A549 (cell line): ENCODE measurements at regions of chr15 and their contacts with region 1.

Region 1: GRCh38 chr15:69540622-69541021 is 88.0 kb downstream of the RPLP1 start:
- DNase-seq: no peak
- ATAC-seq: no peak
- H3K4me3 ChIP-seq: no peak overlapping the region
- H3K27ac ChIP-seq: no peak overlapping the region
- H3K4me1 ChIP-seq: no peaks in the 10 kb centered on the region
- CTCF ChIP-seq: no peak
- EP300 ChIP-seq: no peak
- POLR2A ChIP-seq: no peak
- RAD21 ChIP-seq: no peak

Region 2: DNA sequence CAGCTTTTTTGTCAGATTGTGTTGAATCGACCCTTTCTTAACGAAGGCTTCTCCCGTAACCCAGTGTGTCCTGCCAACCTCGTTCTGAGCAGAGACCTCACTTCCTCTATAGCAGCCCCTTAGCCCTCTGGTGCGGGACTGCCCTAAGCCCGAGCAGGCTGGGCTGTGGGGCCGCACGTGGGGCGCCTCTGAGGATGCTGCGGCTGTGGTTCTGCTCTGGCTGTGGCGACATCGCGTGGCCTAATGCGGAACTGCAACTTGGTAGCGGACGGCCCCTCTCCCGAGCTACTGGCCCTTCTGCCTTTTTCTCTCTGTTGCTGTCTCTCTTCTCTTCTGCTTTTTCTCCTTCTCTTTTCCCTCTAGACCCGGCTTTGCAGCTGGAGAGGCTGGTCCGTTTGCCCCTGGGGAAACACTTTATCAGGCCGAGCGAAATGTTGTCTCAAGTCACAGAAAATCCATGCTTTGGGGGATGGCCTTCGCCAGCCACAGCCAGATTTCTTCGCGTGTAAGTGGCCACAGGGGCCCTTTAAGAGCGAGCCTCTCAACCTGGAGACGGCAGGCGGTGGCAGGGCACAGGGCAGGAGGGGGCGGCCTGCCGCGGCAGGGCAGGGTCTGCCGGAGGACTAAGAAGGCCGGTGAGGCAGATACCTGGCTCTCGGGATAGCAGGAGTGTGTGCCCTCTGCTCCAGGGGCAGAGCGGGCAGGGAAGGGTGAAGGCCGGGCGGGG is 145.9 kb before region 1 on chr15:
- CTCF ChIA-PET with region 1: no interaction called
- POLR2A ChIA-PET with region 1: no interaction called
- DNase-seq: peak; percentile 74 to 93
- ATAC-seq: peak; percentile 81 to 93
- H3K4me3 ChIP-seq: no peak overlapping the region
- H3K27ac ChIP-seq: peak overlapping the region; percentile 24 to 66; a peak in 5 of 6 replicates
- H3K4me1 ChIP-seq: peaks cover 26% of the 10 kb centered on the region
- CTCF ChIP-seq: peak; percentile 90
- EP300 ChIP-seq: no peak
- POLR2A ChIP-seq: no peak
- RAD21 ChIP-seq: peak; percentile 92 to 94

Region 3: GRCh38 chr15:69452692-69453521 is 87.7 kb before region 1 on chr15 and contains the start of gene RPLP1:
- CTCF ChIA-PET with region 1: no interaction called
- POLR2A ChIA-PET with region 1: no interaction called
- DNase-seq: peak; percentile 94 to 97
- ATAC-seq: peak; percentile 80 to 88
- H3K4me3 ChIP-seq: peak within 1 kb of the TSS; percentile 94
- H3K27ac ChIP-seq: peak within 1 kb of the TSS; percentile 90 to 93
- H3K4me1 ChIP-seq: peaks cover 36% of the 10 kb centered on the region
- CTCF ChIP-seq: no peak
- EP300 ChIP-seq: no peak
- POLR2A ChIP-seq: peak; percentile 100
- RAD21 ChIP-seq: no peak
- polyA plus RNA-seq, gene RPLP1: 1,245 and 1,557 TPM in 2 replicates

Region 4: DNA sequence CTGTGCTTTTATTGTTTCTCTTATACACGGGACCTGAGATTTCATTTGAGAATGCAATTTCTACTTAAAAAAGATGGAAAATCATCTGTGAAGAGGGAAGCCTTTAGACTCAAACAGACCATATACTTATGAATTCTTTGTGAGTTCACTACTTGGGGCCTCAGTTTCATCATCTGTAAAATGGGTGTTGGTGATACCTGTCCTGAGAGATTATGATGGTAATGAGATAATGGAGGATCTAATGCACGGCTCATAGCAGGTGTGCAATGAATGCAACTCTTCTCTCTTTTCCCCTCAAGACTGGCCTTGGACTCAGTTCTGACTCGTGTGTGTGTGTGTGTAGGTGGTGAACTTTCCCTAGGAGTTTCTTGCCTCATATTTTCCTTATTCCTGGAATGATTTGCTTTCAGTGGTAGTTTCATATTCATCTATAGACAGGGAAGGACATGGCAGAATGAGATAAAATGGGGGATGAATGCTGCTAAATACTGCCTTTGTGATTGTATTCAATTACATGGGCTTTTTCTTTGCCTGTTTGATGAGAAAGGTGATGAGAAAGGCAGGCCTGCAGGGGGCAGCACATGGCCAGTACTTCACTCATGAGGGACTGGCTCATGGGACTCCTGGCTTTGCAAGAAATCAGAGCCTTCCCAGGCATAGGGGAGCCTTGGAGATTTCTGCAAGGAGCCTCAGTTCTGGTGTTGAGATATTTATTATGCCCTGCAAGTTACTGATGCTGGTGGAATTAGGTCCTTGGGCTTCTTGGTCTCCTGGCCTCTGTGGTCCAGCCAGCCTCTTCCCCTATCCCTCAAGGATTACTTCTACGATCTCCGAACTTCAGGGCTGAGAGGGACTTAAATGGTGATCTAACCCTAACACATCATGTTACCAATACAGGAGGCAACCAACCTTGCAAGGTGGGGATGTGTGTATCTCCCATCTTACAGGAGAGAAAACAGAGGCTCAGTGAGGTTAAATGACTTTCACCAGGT is 17.3 kb before region 1 on chr15:
- CTCF ChIA-PET with region 1: interaction called, 11 read pairs
- POLR2A ChIA-PET with region 1: no interaction called
- DNase-seq: peak; percentile 82
- ATAC-seq: peak; percentile 86 to 95
- H3K4me3 ChIP-seq: no peak overlapping the region
- H3K27ac ChIP-seq: peak overlapping the region in 1 of 2 experiments; percentile 42; a peak in 3 of 6 replicates
- H3K4me1 ChIP-seq: peaks cover 11% of the 10 kb centered on the region; the same call in 2 of the 3 replicates
- CTCF ChIP-seq: peak; percentile 91
- EP300 ChIP-seq: no peak
- POLR2A ChIP-seq: no peak
- RAD21 ChIP-seq: peak; percentile 94 to 96

Region 5: GRCh38 chr15:69604072-69604411 is 63.4 kb after region 1 on chr15:
- CTCF ChIA-PET with region 1: no interaction called
- POLR2A ChIA-PET with region 1: no interaction called
- DNase-seq: peak in 1 of 2 experiments; percentile 85
- ATAC-seq: peak; percentile 49 to 83; a peak in 5 of 6 replicates
- H3K4me3 ChIP-seq: no peak overlapping the region
- H3K27ac ChIP-seq: no peak overlapping the region
- H3K4me1 ChIP-seq: peaks cover 12% of the 10 kb centered on the region
- CTCF ChIP-seq: peak; percentile 34
- EP300 ChIP-seq: no peak
- POLR2A ChIP-seq: no peak
- RAD21 ChIP-seq: peak; percentile 35 to 56

Region 6: DNA sequence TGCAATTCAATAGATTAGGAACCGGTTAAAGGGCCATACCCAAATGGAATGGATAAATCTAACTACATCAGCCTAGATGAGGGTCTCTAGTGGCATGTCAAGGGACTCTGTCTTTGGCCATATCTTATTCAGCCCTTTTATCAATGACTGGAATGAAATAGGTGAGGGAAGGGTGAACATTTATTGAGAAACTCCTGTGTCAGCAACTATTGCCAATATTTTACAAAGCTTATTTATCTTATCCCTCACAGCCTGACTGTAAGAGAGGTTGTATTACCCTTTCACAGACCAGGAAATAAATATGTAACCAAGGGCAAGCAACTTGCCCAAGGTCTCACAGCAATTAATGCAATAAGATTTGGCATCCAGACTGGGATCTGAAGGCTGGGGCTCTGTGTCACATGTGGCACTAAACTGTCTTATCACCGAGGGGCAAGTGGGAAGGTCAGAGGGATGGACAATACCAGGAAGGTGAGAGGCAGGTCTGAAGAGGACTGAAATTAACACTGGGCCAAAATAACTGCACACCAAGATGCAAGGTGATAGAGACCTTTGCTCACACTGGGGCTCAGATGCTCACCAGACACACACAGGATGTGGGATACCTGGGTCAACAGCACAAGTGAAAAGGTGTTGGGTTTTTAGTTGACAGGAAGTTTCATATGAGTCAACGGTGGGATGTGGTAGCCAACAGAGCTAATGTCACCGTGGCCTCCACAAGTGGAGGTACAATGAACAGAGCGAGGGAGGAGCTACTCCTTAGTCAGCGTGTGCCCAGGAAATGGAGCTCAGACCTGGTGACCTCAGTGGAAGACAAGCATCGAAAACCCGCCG is 173.3 kb after region 1 on chr15:
- CTCF ChIA-PET with region 1: no interaction called
- POLR2A ChIA-PET with region 1: no interaction called
- DNase-seq: no peak
- ATAC-seq: no peak
- H3K4me3 ChIP-seq: no peak overlapping the region
- H3K27ac ChIP-seq: no peak overlapping the region
- H3K4me1 ChIP-seq: no peaks in the 10 kb centered on the region
- CTCF ChIP-seq: no peak
- EP300 ChIP-seq: no peak
- POLR2A ChIP-seq: no peak
- RAD21 ChIP-seq: no peak